HEK293 (cell line): ENCODE measurements at regions of chr17 and their contacts with region 1.

Region 1: DNA sequence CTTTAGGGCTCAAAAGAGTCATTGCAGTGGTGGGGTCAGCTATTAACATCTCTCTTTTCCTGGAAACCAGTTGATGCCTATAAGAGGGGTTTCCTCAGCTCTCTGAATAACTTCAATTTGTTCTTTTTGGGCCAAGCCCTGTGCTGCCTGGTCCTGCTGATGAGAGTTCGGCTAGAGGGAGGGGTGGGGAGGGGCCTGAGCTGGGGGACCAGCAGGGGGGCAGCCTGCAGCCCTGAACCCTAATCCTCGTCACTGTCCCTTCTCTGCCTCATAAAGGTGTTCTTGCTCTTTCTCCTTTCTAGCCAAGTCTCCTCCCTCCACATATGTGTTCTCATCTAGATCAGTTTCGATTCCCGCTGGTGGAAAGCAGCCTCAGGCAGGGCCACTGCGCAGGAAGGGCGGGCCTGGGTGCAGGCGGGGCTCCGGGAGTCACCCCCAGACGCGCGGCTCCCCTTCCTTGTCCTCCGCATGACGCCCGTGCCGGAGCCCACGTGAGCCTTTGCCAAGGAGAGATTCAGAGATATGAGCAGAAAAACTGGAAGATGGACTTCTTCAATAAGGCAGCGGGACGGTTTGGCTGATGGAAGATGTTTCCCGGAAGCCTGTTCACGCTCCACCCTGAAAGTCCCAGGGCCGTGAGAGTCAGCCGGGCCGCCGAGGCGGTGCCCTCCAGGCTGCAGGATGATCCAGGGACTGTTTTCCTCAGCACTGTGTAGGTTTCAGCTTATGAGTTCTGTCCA is 15.0 kb upstream of the RHOT1 start:
- H3K4me3 ChIP-seq: peak overlapping the region; percentile 68
- H3K27ac ChIP-seq: peak overlapping the region; percentile 54
- H3K4me1 ChIP-seq: peaks cover 12% of the 10 kb centered on the region
- CTCF ChIP-seq: no peak

Region 2: DNA sequence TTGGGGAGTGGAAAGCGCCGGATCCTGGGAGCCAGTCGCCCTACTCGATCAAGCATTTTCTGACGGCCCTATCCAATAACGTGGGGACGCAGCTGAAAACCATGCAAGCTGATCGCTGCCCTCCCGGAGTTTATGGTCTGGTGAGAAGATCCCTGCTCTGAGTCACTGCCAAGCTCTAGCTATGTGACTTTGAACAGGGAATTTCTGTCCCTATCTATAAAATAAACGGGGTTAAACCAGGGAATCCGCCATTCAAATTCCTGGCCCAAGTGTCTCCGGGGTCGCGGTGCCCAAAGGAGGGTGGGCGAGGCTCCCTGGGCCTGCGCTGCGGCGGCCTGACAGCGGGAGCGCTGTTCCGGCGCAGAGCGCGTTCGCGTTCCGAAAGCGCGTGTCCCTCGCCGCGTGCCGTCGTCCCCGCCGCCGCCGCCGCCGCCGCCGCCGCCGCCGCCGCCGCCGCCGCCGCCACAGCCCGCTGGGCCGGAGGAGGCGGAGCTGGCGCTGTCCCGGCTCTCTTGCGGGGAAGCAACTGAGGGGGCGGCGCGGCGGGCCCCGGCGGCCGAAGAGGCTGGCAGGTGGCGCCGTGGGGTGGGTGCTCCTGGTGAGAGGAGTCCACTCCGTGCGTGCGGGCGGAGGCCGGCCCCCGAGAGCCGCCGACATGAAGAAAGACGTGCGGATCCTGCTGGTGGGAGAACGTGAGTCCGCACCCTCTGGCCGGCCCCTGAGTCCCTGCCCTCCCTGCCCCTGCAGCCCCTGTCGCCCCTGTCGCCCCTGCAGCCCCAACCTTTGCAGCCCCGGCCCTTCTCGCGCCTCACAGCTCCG is 14.9 kb after region 1 on chr17 and contains the start of gene RHOT1:
- CTCF ChIA-PET with region 1: interaction called, 68 read pairs
- POLR2A ChIA-PET with region 1: interaction called, 4 read pairs
- H3K4me3 ChIP-seq: peak within 1 kb of the TSS; percentile 98
- H3K27ac ChIP-seq: peak within 1 kb of the TSS; percentile 96
- H3K4me1 ChIP-seq: peaks cover 5% of the 10 kb centered on the region; the same call in 1 of the 2 replicates
- CTCF ChIP-seq: peak; percentile 66; the same call in 1 of the 2 replicates

Region 3: DNA sequence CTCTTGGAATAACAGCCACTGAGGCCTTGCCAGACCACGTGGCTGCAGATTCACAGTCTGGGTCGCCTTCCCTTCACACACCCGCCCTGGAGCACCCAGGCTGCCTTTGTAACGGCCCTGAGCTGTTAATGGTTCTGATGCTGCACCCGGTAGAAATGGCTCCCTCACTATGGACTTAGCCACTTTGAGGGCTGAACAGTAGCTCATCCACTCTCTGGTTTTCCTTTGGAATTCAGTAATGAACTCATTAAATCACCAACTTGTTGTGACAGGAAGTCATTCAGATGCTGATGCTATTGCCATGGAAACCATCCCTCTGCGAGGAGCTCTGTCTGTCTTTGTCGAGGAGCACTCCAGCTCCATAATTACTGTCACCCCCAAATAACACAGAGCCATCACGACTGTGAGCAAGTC is 418.7 kb after region 1 on chr17:
- CTCF ChIA-PET with region 1: no interaction called
- POLR2A ChIA-PET with region 1: no interaction called
- H3K4me3 ChIP-seq: no peak overlapping the region
- H3K27ac ChIP-seq: no peak overlapping the region
- H3K4me1 ChIP-seq: no peaks in the 10 kb centered on the region
- CTCF ChIP-seq: no peak